ENCODE measurements at regions of chr16 and their contacts with region 1.

Region 1: GRCh38 chr16:14263011-14263410 is 191.9 kb downstream of the MRTFB start:
- DNase-seq: no peak
- H3K4me3 ChIP-seq: no peak overlapping the region
- H3K27ac ChIP-seq: no peak overlapping the region
- H3K4me1 ChIP-seq: no peaks in the 10 kb centered on the region
- H3K27me3 ChIP-seq: no peaks in the 10 kb centered on the region
- CTCF ChIP-seq: no peak
- POLR2A ChIP-seq: no peak

Region 2: GRCh38 chr16:14151256-14152030 is 111.6 kb before region 1 on chr16:
- intact Hi-C with region 1: no loop called
- DNase-seq: peak; percentile 11
- H3K4me3 ChIP-seq: no peak overlapping the region
- H3K27ac ChIP-seq: peak overlapping the region in 1 of 2 donors; percentile 19
- H3K4me1 ChIP-seq: no peaks in the 10 kb centered on the region
- H3K27me3 ChIP-seq: no peaks in the 10 kb centered on the region
- CTCF ChIP-seq: no peak
- POLR2A ChIP-seq: no peak

Region 3: DNA sequence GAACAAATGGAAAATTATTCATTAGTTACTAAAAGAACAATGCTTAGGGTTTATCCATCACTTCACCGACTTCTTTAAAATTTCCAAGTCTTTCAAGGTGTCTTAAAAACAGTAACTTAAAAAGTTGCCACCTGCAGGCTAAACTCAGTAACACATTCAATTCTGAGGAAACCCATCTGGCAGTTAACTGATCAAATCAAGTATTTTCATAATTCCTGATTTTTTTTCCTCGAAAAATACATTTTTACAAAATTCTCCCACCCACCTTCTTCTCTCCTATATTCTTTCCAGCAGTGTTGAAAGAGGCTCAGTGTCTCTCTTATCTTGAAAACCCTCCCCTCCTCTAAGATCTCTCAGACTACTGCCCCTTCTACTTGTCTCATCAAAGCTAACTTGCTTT is 337.2 kb after region 1 on chr16:
- intact Hi-C with region 1: loop called (anchors 5 kb)
- DNase-seq: no peak
- H3K4me3 ChIP-seq: no peak overlapping the region
- H3K27ac ChIP-seq: no peak overlapping the region
- H3K4me1 ChIP-seq: no peaks in the 10 kb centered on the region
- H3K27me3 ChIP-seq: no peaks in the 10 kb centered on the region
- CTCF ChIP-seq: peak in 3 of 4 experiments; percentile 40 to 59 (median 58)
- POLR2A ChIP-seq: no peak

Measured in prostate gland (tissue), 2 donors.